ENCODE measurements at regions of chr17 and their contacts with region 1.

Region 1: GRCh38 chr17:80263253-80264204 is 2.9 kb downstream of the RNF213 start:
- DNase-seq: peak; percentile 89
- H3K4me3 Mint-ChIP-seq: peak overlapping the region; percentile 100
- H3K27ac Mint-ChIP-seq: peak overlapping the region; percentile 87
- H3K4me1 Mint-ChIP-seq: peaks cover 49% of the 10 kb centered on the region
- H3K27me3 Mint-ChIP-seq: no peaks in the 10 kb centered on the region

Region 2: DNA sequence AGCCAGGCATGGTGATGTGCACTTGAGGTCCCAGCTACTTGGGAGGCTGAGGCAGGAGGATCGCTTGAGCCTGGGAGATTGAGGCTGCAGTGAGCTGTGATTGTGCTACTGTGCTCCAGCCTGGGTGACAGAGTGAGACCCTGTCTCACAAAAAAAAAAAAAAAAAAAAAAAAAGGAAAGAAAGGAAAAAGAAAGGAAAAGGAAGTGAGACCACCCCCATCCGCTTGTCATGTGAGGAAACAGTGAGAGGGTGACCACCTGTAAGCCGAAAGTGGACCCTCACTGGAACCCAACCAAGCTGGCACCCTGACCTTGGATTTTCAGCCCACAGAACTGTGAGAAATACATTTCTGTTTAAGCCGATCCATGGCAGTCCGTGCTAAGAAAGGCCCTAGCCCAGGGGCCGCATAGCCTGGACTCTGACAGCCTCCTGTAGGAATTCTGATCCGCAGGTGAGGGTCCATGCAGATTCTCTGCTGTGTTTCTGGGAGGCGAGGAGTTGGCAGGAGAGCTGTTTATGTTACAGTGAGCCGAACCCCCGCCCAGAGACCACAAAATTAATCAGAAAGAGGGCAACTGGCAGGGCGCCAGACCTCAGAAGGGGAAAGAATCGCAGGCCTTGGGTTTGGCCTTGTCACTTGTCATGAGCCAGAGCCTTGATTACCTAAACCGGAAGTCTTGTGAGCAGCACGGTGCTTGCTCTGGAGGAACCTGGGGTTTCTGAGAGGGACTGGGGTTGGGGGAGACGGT is 44.3 kb before region 1 on chr17:
- intact Hi-C with region 1: loop called (anchors 2 kb)
- DNase-seq: peak; percentile 75
- H3K4me3 Mint-ChIP-seq: peak overlapping the region; percentile 85
- H3K27ac Mint-ChIP-seq: peak overlapping the region; percentile 85
- H3K4me1 Mint-ChIP-seq: peaks cover 20% of the 10 kb centered on the region
- H3K27me3 Mint-ChIP-seq: no peaks in the 10 kb centered on the region

Measured in activated T-helper 1 cell treated with anti-CD3 and anti-CD28 coated beads, Interleukin-12 subunit alpha, Interleukin-12 subunit beta, Interleukin-2, Interleukin-4 antibody, amounts not matched to agents 30 ng/mL and 10 ng/mL and 1 ng/mL, durations not matched to agents 14 hours and 24 hours and 36 hours (primary cell).